CD4-positive, alpha-beta memory T cell (primary cell): ENCODE measurements at regions of chr2 and their contacts with region 1.

Region 1: DNA sequence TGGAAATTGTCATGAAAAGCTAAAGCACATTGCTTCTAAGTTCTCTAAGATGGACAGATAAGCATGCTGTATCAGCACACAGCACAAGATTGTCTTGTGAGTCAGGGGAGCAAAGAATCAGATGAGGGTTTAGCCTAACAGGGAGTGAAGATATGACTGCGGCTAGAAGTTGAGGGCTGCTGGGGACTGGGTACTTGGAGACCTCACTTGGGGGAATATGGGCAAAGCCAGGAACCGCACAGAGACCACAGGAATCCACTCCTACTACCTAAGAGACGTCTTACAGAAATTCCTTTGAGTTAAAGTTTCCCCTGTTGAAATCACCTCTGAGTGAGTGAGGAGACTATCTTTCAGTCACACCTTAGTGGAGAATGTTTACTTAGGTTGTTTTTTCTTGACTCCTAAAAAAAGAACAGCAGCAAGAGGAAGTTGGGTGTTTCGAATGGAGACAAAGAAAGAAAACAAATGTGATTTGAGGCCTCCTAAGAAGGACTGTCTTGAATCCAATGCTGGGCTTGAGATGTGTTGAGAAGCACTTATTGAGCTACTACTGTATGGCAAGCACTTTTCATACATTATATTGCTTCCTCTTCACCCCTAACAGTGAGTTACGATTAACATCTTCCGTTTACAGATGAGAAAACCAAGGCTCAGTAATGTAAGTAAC is 100.7 kb downstream of the ANKRD44 start:
- DNase-seq: peak in 4 of 5 donors; percentile 37 to 86 (median 40)
- H3K4me3 ChIP-seq: peak overlapping the region in 1 of 2 donors; percentile 12
- H3K4me3 Mint-ChIP-seq: peak overlapping the region; percentile 38 to 88 (median 74)
- H3K27ac ChIP-seq: peak overlapping the region; percentile 68
- H3K27ac Mint-ChIP-seq: peak overlapping the region; percentile 88 to 100 (median 98)
- H3K4me1 ChIP-seq: peaks cover 100% of the 10 kb centered on the region
- H3K4me1 Mint-ChIP-seq: peaks cover 84 to 100% (median 93%) of the 10 kb centered on the region in 4 donors
- H3K27me3 ChIP-seq: no peaks in the 10 kb centered on the region
- H3K27me3 Mint-ChIP-seq: peaks cover 0 to 3% of the 10 kb centered on the region in 2 donors

Region 2: GRCh38 chr2:197152451-197153228 is 57.2 kb before region 1 on chr2:
- CTCF ChIA-PET with region 1: no interaction called
- POLR2A ChIA-PET with region 1: no interaction called
- intact Hi-C with region 1: no loop called
- DNase-seq: peak; percentile 18 to 44 (median 32)
- H3K4me3 ChIP-seq: no peak overlapping the region
- H3K4me3 Mint-ChIP-seq: peak overlapping the region; percentile 13 to 68 (median 62)
- H3K27ac ChIP-seq: no peak overlapping the region
- H3K27ac Mint-ChIP-seq: peak overlapping the region; percentile 15 to 92 (median 72)
- H3K4me1 ChIP-seq: peaks cover 78% of the 10 kb centered on the region
- H3K4me1 Mint-ChIP-seq: peaks cover 62 to 85% (median 77%) of the 10 kb centered on the region in 4 donors
- H3K27me3 ChIP-seq: no peaks in the 10 kb centered on the region
- H3K27me3 Mint-ChIP-seq: no peaks in the 10 kb centered on the region

Region 3: GRCh38 chr2:197229509-197230443 is 19.9 kb after region 1 on chr2:
- CTCF ChIA-PET with region 1: interaction called, 11 read pairs
- POLR2A ChIA-PET with region 1: interaction called, 1,394 read pairs
- intact Hi-C with region 1: no loop called
- DNase-seq: no peak
- H3K4me3 ChIP-seq: no peak overlapping the region
- H3K4me3 Mint-ChIP-seq: peak overlapping the region in 5 of 8 donors; percentile 11 to 71 (median 29)
- H3K27ac ChIP-seq: no peak overlapping the region
- H3K27ac Mint-ChIP-seq: peak overlapping the region; percentile 22 to 65 (median 38)
- H3K4me1 ChIP-seq: peaks cover 99% of the 10 kb centered on the region
- H3K4me1 Mint-ChIP-seq: peaks cover 65 to 98% (median 85%) of the 10 kb centered on the region in 4 donors
- H3K27me3 ChIP-seq: no peaks in the 10 kb centered on the region
- H3K27me3 Mint-ChIP-seq: no peaks in the 10 kb centered on the region

Region 4: GRCh38 chr2:197239434-197239833 is 29.6 kb after region 1 on chr2:
- CTCF ChIA-PET with region 1: interaction called, 12 read pairs
- POLR2A ChIA-PET with region 1: interaction called, 1,394 read pairs
- intact Hi-C with region 1: loop called (anchors 2 kb)
- DNase-seq: no peak
- H3K4me3 ChIP-seq: peak overlapping the region in 1 of 2 donors; percentile 52
- H3K4me3 Mint-ChIP-seq: peak overlapping the region; percentile 80 to 96 (median 87)
- H3K27ac ChIP-seq: peak overlapping the region; percentile 66
- H3K27ac Mint-ChIP-seq: peak overlapping the region; percentile 87 to 99 (median 95)
- H3K4me1 ChIP-seq: peaks cover 97% of the 10 kb centered on the region
- H3K4me1 Mint-ChIP-seq: peaks cover 70 to 93% (median 78%) of the 10 kb centered on the region in 4 donors
- H3K27me3 ChIP-seq: no peaks in the 10 kb centered on the region
- H3K27me3 Mint-ChIP-seq: no peaks in the 10 kb centered on the region

Region 5: DNA sequence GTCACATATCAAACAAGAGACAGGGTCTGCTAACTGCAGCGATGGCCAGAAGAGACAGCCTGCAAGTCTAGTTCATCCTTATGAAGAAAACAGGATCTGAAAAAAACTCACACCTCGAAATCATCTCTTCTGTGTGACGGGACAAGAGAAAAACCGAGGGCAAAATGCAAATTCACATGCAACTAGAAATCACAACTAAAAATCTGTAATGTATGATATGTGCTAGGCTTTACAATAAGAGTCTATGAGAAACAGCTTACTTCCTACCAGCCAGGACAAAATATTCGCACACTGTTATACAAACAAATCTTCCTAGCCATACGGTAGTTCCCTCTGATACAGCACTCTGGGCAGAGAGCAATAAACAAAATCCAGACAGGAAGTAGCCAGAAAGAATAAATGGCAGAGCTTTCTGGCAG is 51.9 kb after region 1 on chr2:
- CTCF ChIA-PET with region 1: interaction called, 9 read pairs
- POLR2A ChIA-PET with region 1: interaction called, 1,394 read pairs
- intact Hi-C with region 1: no loop called
- DNase-seq: peak in 1 of 5 donors; percentile 33
- H3K4me3 ChIP-seq: no peak overlapping the region
- H3K4me3 Mint-ChIP-seq: peak overlapping the region; percentile 43 to 82 (median 64)
- H3K27ac ChIP-seq: peak overlapping the region; percentile 65
- H3K27ac Mint-ChIP-seq: peak overlapping the region; percentile 76 to 98 (median 91)
- H3K4me1 ChIP-seq: peaks cover 87% of the 10 kb centered on the region
- H3K4me1 Mint-ChIP-seq: peaks cover 65 to 91% (median 77%) of the 10 kb centered on the region in 4 donors
- H3K27me3 ChIP-seq: no peaks in the 10 kb centered on the region
- H3K27me3 Mint-ChIP-seq: no peaks in the 10 kb centered on the region